AG04449 (cell line): ENCODE measurements at regions of chr16 and their contacts with region 1.

Region 1: GRCh38 chr16:11255737-11256660 is at the start of gene SOCS1:
- DNase-seq: no peak
- H3K4me3 ChIP-seq: peak within 1 kb of the TSS; percentile 74
- CTCF ChIP-seq: peak; percentile 74

Region 2: GRCh38 chr16:10949370-10949970 is 306.5 kb before region 1 on chr16:
- CTCF ChIA-PET with region 1: interaction called, 69 read pairs
- POLR2A ChIA-PET with region 1: interaction called, 9 read pairs
- DNase-seq: no peak
- H3K4me3 ChIP-seq: no peak overlapping the region
- CTCF ChIP-seq: no peak

Region 3: DNA sequence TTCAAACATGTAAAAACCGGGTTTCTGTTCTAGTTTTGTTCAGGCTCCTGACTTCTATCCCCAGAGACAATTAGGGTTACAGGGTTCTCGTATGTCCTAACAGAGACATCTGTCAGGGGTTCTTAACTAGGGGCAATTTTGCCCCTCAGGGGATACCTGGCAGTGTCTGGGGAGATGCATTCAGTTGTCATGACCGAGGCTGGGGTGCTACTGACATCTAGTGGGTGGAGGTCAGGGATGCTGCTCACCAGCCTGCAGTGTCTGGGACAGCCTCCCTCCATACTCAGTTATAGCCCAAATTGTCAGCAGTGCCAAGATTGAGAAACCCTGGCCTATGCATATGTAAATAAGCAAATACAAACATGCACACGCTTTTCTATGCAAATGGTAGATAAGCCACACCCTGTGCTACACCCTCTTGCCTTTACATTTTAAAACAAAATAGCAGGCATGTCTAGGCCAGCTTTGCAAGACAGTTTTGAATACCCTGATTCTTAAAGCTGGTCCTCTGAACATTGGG is 274.2 kb before region 1 on chr16:
- CTCF ChIA-PET with region 1: interaction called, 492 read pairs
- POLR2A ChIA-PET with region 1: interaction called, 4 read pairs
- DNase-seq: no peak
- H3K4me3 ChIP-seq: no peak overlapping the region
- CTCF ChIP-seq: peak; percentile 19

Region 4: DNA sequence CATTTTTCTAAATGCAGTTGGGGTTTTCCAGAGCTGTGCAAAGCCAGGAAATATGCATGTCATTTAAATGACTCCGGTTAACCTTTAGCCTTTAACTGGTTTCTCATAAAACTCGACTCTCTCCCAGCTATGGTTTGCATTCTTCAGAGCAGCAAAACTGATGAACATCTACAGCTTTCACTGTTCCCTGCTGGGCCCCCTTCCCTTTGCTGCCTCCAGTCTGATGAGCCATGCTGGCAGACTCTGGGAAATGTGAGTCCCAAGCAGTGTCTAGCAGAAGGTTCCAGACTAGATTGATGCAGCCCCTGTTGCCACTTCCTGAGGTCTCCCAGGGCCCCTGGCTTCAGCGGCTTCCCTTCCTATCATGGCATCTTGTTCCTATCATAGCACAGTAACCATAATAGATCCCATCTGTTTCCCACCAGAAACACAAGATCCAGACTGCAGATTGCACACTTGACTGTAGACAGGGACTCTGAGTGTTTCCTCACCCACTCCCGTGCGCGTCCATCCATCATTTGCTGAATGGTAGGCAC is 176.3 kb before region 1 on chr16:
- CTCF ChIA-PET with region 1: interaction called, 4 read pairs
- POLR2A ChIA-PET with region 1: interaction called, 13 read pairs
- DNase-seq: peak; percentile 95
- H3K4me3 ChIP-seq: no peak overlapping the region; the same call in 1 of the 2 replicates
- CTCF ChIP-seq: no peak

Region 5: GRCh38 chr16:11201498-11202259 is 54.3 kb before region 1 on chr16:
- CTCF ChIA-PET with region 1: interaction called, 5 read pairs
- POLR2A ChIA-PET with region 1: interaction called, 16 read pairs
- DNase-seq: no peak
- H3K4me3 ChIP-seq: peak overlapping the region; percentile 6
- CTCF ChIP-seq: no peak

Region 6: GRCh38 chr16:11350921-11351335 is 94.9 kb after region 1 on chr16:
- CTCF ChIA-PET with region 1: interaction called, 155 read pairs
- POLR2A ChIA-PET with region 1: interaction called, 33 read pairs
- DNase-seq: peak; percentile 57
- H3K4me3 ChIP-seq: peak overlapping the region; percentile 13
- CTCF ChIP-seq: no peak